CD4-positive, alpha-beta memory T cell (primary cell): ENCODE measurements at regions of chr5 and their contacts with region 1.

Region 1: GRCh38 chr5:87780831-87781760 is 368.4 kb upstream of the CCNH start:
- DNase-seq: peak; percentile 67 to 76 (median 72)
- H3K4me3 ChIP-seq: no peak overlapping the region
- H3K4me3 Mint-ChIP-seq: no peak overlapping the region
- H3K27ac ChIP-seq: no peak overlapping the region
- H3K27ac Mint-ChIP-seq: no peak overlapping the region
- H3K4me1 ChIP-seq: no peaks in the 10 kb centered on the region
- H3K4me1 Mint-ChIP-seq: peaks cover 0 to 2% (median under 1%) of the 10 kb centered on the region in 4 donors
- H3K27me3 ChIP-seq: peaks cover 7% of the 10 kb centered on the region
- H3K27me3 Mint-ChIP-seq: peaks cover 8 to 15% of the 10 kb centered on the region in 2 donors

Region 2: DNA sequence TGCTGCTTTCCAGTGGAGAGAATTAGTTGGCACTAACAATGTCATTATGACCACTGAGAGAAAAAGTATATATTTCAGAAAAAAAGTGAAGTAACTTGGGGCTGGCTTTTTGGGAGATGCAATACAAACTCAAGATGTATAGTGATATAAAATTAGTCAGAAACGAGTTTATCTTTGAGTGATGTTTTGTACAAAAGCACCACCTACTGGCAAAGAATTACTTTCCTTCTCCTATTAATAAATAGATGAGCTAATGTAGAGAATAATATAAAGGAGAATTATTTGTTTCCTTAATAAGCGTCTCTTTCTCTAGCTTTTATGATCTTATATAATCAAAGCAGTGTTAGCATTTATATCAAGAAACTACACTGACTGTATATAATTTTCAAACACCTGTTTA is 943.1 kb after region 1 on chr5:
- CTCF ChIA-PET with region 1: interaction called, 5 read pairs
- POLR2A ChIA-PET with region 1: no interaction called
- intact Hi-C with region 1: loop called (anchors 1 kb)
- DNase-seq: no peak
- H3K4me3 ChIP-seq: no peak overlapping the region
- H3K4me3 Mint-ChIP-seq: no peak overlapping the region
- H3K27ac ChIP-seq: no peak overlapping the region
- H3K27ac Mint-ChIP-seq: no peak overlapping the region
- H3K4me1 ChIP-seq: no peaks in the 10 kb centered on the region
- H3K4me1 Mint-ChIP-seq: no peaks in the 10 kb centered on the region
- H3K27me3 ChIP-seq: no peaks in the 10 kb centered on the region
- H3K27me3 Mint-ChIP-seq: peaks cover 16 to 27% of the 10 kb centered on the region in 2 donors